Left cardiac atrium (tissue), 4 donors: ENCODE measurements at regions of chr11 and their contacts with region 1.

Region 1: GRCh38 chr11:73350908-73351636 is 25.1 kb upstream of the RELT start:
- DNase-seq: peak; percentile 61
- ATAC-seq: peak; percentile 49 to 58

Region 2: GRCh38 chr11:73204711-73205121 is 146.4 kb before region 1 on chr11:
- intact Hi-C with region 1: no loop called
- DNase-seq: peak; percentile 54
- ATAC-seq: peak; percentile 70 to 76

Region 3: GRCh38 chr11:73393479-73394380 is 42.7 kb after region 1 on chr11:
- intact Hi-C with region 1: loop called (anchors 5 kb)
- DNase-seq: peak; percentile 72
- ATAC-seq: peak; percentile 61 to 74